Left colon (tissue), 2 donors: ENCODE measurements at regions of chr15 and their contacts with region 1.

Region 1: GRCh38 chr15:25739687-25740121 is 123.4 kb downstream of the ATP10A start:
- DNase-seq: no peak
- ATAC-seq: no peak

Region 2: DNA sequence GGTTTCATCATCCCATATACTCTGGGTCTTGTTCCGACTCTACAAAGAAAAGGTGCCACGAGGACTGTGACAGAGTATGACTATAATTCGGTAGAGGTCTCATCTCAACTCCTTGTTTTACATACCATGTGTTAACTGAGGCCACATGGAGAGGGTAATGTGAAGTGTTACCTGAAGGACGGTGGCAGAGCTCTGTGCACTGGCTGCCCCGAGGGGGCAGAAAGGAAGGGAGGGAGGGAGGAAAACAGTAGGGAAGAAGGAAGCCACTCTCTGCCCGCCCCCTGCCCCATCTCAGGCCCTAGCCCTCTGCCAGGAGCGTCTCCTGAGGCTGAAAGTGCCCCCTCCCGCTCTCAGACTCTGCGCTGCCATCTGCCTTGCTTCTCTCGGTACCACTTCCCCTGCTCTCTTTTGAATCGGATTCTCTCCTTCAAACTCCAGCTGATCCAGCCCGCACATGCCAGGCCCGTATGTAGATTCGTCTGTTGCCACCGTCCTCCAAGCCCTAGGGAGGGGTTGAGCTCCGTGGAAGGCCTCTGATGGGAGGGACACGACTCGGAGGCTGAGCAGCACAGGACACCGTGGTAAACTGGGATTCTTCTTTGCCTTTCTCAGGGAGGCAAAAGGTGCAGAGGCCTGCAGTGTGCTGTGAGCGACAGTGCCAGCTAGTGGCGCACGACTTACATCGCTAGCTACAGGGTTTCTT is 193.9 kb after region 1 on chr15:
- intact Hi-C with region 1: loop called in 1 of 2 experiments (anchors 10 kb)
- DNase-seq: peak; percentile 43 to 63
- ATAC-seq: peak; percentile 69

Region 3: GRCh38 chr15:25947323-25948314 is 207.9 kb after region 1 on chr15:
- intact Hi-C with region 1: no loop called
- DNase-seq: no peak
- ATAC-seq: no peak